ENCODE measurements at regions of chr19 and their contacts with region 1.

Region 1: GRCh38 chr19:2747349-2747748 is 7.5 kb upstream of the SLC39A3 start:
- DNase-seq: no peak
- H3K4me3 ChIP-seq: no peak overlapping the region
- H3K27ac ChIP-seq: no peak overlapping the region
- H3K4me1 ChIP-seq: no peaks in the 10 kb centered on the region
- H3K27me3 ChIP-seq: no peaks in the 10 kb centered on the region
- CTCF ChIP-seq: no peak
- POLR2A ChIP-seq: no peak

Region 2: GRCh38 chr19:2653710-2654707 is 93.3 kb before region 1 on chr19:
- intact Hi-C with region 1: loop called (anchors 5 kb)
- DNase-seq: no peak
- H3K4me3 ChIP-seq: no peak overlapping the region
- H3K27ac ChIP-seq: peak overlapping the region; percentile 21 to 56
- H3K4me1 ChIP-seq: peaks cover 30% of the 10 kb centered on the region
- H3K27me3 ChIP-seq: no peaks in the 10 kb centered on the region
- CTCF ChIP-seq: no peak
- POLR2A ChIP-seq: no peak

Region 3: GRCh38 chr19:2700660-2701360 is 46.5 kb before region 1 on chr19:
- intact Hi-C with region 1: no loop called
- DNase-seq: no peak
- H3K4me3 ChIP-seq: no peak overlapping the region
- H3K27ac ChIP-seq: peak overlapping the region in 1 of 2 donors; percentile 31
- H3K4me1 ChIP-seq: peaks cover 7% of the 10 kb centered on the region
- H3K27me3 ChIP-seq: no peaks in the 10 kb centered on the region
- CTCF ChIP-seq: no peak
- POLR2A ChIP-seq: no peak